ENCODE measurements at regions of chr4 and their contacts with region 1.

Region 1: DNA sequence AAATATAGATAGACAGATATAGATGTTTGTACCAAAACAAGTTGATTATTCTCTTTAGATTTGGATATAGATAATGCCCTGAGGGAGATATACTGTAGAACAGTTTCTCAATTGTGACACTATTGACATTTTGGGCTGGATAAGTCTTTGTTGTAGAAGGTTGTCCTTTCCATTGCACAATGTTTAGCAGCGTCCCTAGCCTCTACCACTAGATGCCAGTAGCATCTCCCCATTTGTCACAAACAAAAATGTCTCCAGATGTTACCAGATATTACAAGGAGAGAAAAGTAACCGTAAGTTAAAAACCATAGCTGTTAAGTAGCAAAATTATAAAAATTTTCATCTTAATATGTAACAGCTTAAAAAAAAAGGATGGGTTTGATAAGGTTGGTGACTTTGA is 2595.3 kb downstream of the ARAP2 start:
- DNase-seq: peak; percentile 43
- ATAC-seq: no peak
- H3K4me3 ChIP-seq: no peak overlapping the region
- H3K27ac ChIP-seq: no peak overlapping the region
- H3K4me1 ChIP-seq: no peaks in the 10 kb centered on the region
- H3K27me3 ChIP-seq: no peaks in the 10 kb centered on the region
- CTCF ChIP-seq: peak; percentile 71

Region 2: GRCh38 chr4:34422472-34423175 is 773.6 kb after region 1 on chr4:
- CTCF ChIA-PET with region 1: interaction called, 3 read pairs
- POLR2A ChIA-PET with region 1: no interaction called
- intact Hi-C with region 1: loop called (anchors 1 kb)
- DNase-seq: peak; percentile 10
- ATAC-seq: no peak
- H3K4me3 ChIP-seq: no peak overlapping the region
- H3K27ac ChIP-seq: no peak overlapping the region
- H3K4me1 ChIP-seq: no peaks in the 10 kb centered on the region
- H3K27me3 ChIP-seq: no peaks in the 10 kb centered on the region
- CTCF ChIP-seq: peak; percentile 42; the same call in 1 of the 2 replicates

Region 3: GRCh38 chr4:34720571-34720970 is 1071.6 kb after region 1 on chr4:
- CTCF ChIA-PET with region 1: interaction called, 4 read pairs
- POLR2A ChIA-PET with region 1: no interaction called
- intact Hi-C with region 1: loop called (anchors 1 kb)
- DNase-seq: peak; percentile 55
- ATAC-seq: peak; percentile 38
- H3K4me3 ChIP-seq: no peak overlapping the region
- H3K27ac ChIP-seq: no peak overlapping the region
- H3K4me1 ChIP-seq: no peaks in the 10 kb centered on the region
- H3K27me3 ChIP-seq: no peaks in the 10 kb centered on the region
- CTCF ChIP-seq: peak; percentile 63